ENCODE measurements at regions of chr16 and their contacts with region 1.

Region 1: GRCh38 chr16:10509534-10510025 is 70.8 kb downstream of the EMP2 start:
- DNase-seq: peak; percentile 71
- ATAC-seq: peak; percentile 99
- H3K4me3 ChIP-seq: no peak overlapping the region
- H3K27ac ChIP-seq: no peak overlapping the region
- H3K4me1 ChIP-seq: no peaks in the 10 kb centered on the region
- H3K27me3 ChIP-seq: no peaks in the 10 kb centered on the region
- CTCF ChIP-seq: peak; percentile 75 to 88 (median 78)
- POLR2A ChIP-seq: no peak
- RAD21 ChIP-seq: peak; percentile 95

Region 2: DNA sequence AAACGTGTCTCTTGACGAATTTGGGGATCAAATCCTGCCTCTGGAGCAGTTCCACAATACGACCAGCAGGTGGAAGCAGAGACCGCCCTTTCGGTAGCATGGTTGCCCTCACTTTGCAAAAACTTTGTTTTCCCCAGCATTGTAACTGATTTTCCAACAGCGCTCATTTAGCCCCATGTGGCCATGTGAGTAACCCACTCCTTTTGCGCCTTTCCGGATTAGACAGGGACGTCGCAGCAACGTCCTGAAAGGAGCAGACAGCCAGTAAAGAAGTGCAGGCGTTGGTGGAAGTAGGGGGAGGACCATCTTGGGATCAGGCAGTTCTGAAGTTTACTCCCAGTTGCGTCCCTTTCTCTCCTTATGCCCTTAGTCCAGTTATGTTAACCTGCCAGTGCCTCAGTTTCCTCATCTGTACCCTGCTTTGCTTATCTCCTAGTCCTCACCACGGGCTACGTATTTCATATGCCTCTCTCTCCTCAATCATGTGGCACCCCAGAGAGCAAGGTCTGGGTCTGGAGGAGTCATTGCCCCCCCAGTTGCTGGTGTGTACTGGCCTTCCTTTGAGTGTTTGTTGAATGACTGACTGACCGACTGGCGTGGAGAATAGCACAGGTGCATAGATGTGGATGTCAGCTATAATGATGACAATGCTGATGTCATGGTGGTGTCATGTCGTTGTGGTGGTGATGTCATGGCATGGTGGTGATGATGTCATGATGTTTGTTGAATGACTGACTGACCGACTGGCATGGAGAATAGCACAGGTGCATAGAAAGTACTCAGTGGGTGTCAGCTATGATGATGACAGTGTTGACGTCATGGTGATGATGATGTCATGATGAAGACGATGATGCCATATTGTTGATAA is 1941.6 kb before region 1 on chr16:
- CTCF ChIA-PET with region 1: no interaction called
- POLR2A ChIA-PET with region 1: no interaction called
- RAD21 ChIA-PET with region 1: no interaction called
- intact Hi-C with region 1: loop called (anchors 5 kb)
- DNase-seq: peak; percentile 94
- ATAC-seq: peak; percentile 89
- H3K4me3 ChIP-seq: no peak overlapping the region
- H3K27ac ChIP-seq: no peak overlapping the region
- H3K4me1 ChIP-seq: peaks cover 0 to 4% of the 10 kb centered on the region in 2 experiments; a peak in 1 of 4 replicates
- H3K27me3 ChIP-seq: no peaks in the 10 kb centered on the region
- CTCF ChIP-seq: peak; percentile 98 to 99 (median 99)
- POLR2A ChIP-seq: no peak
- RAD21 ChIP-seq: peak; percentile 99

Region 3: DNA sequence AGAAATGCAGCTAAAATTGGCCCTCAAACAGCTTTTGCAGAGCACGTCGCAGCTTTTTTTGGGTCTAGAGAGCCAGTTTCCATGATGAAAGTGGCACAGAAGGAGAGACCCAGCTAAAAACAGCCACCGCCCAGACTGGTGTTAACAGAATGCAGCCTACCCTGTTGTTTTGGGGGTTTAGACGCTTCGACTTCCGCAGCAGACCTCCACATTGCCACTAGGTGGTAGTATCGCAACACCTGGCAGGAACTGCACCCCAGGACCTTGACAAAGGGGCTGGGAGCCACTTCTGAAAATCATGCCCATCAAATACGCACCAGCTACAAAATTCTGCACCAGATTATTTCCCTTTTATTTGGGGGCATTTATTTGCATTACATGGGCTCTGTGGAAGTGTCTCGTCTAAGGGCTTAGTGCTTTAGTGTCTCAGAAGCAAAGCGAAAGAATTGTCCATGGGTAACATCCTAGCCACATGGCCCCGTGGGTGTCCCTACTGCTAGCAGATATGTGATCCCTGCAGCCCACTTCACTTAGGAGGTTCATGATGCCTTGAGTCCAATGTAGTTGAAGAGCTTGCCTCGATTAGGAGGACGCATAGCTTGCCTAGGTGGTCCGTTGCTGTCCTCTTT is 1251.0 kb before region 1 on chr16:
- CTCF ChIA-PET with region 1: no interaction called
- POLR2A ChIA-PET with region 1: no interaction called
- RAD21 ChIA-PET with region 1: no interaction called
- intact Hi-C with region 1: loop called (anchors 1 kb)
- DNase-seq: peak; percentile 34
- ATAC-seq: peak; percentile 84
- H3K4me3 ChIP-seq: no peak overlapping the region
- H3K27ac ChIP-seq: no peak overlapping the region
- H3K4me1 ChIP-seq: 0 out of 4 replicates have a peak, but pooled peaks cover 0 to 3% of the 10 kb centered on the region in 2 experiments
- H3K27me3 ChIP-seq: peaks cover 15% of the 10 kb centered on the region
- CTCF ChIP-seq: peak; percentile 64 to 93 (median 88)
- POLR2A ChIP-seq: no peak
- RAD21 ChIP-seq: peak; percentile 83

Region 4: DNA sequence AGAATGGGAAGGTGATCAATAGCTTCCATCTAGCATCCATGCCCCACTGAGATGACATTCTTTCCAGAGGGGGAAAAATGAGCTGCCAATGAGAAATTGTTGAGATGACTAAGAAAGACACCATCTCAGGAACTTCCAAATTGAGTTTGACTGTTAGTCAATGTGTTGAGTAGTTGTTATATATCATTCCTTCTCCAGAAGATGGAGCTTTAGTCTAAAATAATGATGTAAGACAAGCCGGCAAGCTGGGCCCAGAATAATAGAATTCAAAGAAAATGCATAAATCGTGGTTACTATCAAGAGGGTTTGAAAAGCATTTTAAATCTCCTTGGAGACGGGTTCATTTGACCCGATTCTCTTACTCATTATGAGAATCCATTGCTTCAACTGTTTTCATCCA is 194.8 kb before region 1 on chr16:
- CTCF ChIA-PET with region 1: interaction called, 35 read pairs
- POLR2A ChIA-PET with region 1: no interaction called
- RAD21 ChIA-PET with region 1: interaction called, 6 to 9 read pairs
- intact Hi-C with region 1: loop called (anchors 1 kb)
- DNase-seq: no peak
- ATAC-seq: peak; percentile 54; the same call in 1 of the 2 replicates
- H3K4me3 ChIP-seq: no peak overlapping the region
- H3K27ac ChIP-seq: no peak overlapping the region
- H3K4me1 ChIP-seq: peaks cover 0 to 5% of the 10 kb centered on the region in 2 experiments; a peak in 1 of 4 replicates
- H3K27me3 ChIP-seq: no peaks in the 10 kb centered on the region
- CTCF ChIP-seq: peak in 2 of 3 experiments; percentile 11 to 54; a peak in 1 of 6 replicates
- POLR2A ChIP-seq: no peak
- RAD21 ChIP-seq: peak; percentile 70

Region 5: GRCh38 chr16:10485698-10486382 is 23.7 kb before region 1 on chr16:
- CTCF ChIA-PET with region 1: no interaction called
- POLR2A ChIA-PET with region 1: no interaction called
- RAD21 ChIA-PET with region 1: no interaction called
- intact Hi-C with region 1: no loop called
- DNase-seq: no peak
- ATAC-seq: 0 out of 2 replicates have a peak, but pooled peaks have one; percentile 25
- H3K4me3 ChIP-seq: no peak overlapping the region
- H3K27ac ChIP-seq: no peak overlapping the region
- H3K4me1 ChIP-seq: no peaks in the 10 kb centered on the region
- H3K27me3 ChIP-seq: no peaks in the 10 kb centered on the region
- CTCF ChIP-seq: no peak
- POLR2A ChIP-seq: no peak
- RAD21 ChIP-seq: no peak

Region 6: DNA sequence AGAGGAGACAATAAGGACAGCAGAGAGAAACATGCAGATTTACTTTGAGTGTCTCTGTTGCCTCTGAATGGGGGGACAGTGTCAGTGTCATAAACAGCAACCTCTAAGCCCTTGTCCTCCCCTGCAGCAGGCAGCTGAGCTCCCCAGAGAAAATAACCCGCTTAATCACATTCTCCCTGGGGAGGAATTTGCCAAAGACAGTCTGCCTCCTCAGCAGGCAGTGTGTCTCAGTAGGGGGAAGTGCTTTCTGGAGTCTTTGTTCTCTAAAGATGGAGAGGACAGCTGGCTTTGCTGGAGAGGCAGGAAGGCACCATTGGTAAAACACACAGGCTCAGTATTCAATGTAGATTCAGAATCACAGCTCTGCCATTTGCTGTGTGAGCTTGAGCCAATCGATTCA is 169.1 kb after region 1 on chr16:
- CTCF ChIA-PET with region 1: no interaction called
- POLR2A ChIA-PET with region 1: no interaction called
- RAD21 ChIA-PET with region 1: no interaction called
- intact Hi-C with region 1: no loop called
- DNase-seq: no peak
- ATAC-seq: no peak
- H3K4me3 ChIP-seq: no peak overlapping the region
- H3K27ac ChIP-seq: no peak overlapping the region
- H3K4me1 ChIP-seq: no peaks in the 10 kb centered on the region
- H3K27me3 ChIP-seq: no peaks in the 10 kb centered on the region
- CTCF ChIP-seq: no peak
- POLR2A ChIP-seq: no peak
- RAD21 ChIP-seq: no peak

Region 7: DNA sequence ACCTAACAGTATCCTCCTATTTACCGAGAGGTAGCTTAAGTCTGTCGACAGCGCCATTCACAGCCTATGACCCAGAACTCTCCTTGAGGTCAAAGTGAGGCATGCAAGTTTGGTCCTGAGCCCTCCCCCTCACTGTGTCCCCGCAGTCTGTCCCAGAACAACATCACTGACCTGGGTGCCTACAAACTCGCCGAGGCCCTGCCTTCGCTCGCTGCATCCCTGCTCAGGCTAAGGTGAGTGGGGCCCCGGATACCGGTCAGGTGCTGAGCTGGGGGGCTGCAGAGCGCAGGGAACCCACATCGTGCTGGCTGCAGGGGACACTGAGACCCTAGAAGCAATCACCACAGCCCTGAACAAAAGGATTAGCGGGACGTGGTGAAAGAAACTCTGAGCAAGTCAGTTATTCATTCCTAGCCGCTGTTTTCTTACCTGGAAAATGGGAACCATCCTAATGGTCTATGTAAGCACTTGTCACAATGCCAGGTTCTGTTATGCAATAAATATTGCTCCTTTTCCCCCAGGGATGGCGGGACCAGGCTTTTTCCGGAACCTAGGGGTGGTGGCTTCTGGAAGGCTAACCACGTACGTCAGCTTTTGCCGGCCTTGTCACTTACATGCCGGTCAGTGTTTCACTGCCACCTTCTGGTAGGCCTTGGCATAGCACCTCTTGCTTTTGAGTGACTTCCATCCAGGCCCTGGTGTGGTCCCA is 408.9 kb after region 1 on chr16:
- CTCF ChIA-PET with region 1: interaction called, 21 read pairs
- POLR2A ChIA-PET with region 1: no interaction called
- RAD21 ChIA-PET with region 1: no interaction called
- intact Hi-C with region 1: loop called (anchors 1 kb)
- DNase-seq: peak; percentile 88
- ATAC-seq: peak; percentile 96
- H3K4me3 ChIP-seq: peak overlapping the region; percentile 8 to 19; a peak in 2 of 4 replicates
- H3K27ac ChIP-seq: no peak overlapping the region; the same call in 1 of the 2 replicates
- H3K4me1 ChIP-seq: peaks cover 7 to 29% of the 10 kb centered on the region in 2 experiments; a peak in 3 of 4 replicates
- H3K27me3 ChIP-seq: no peaks in the 10 kb centered on the region
- CTCF ChIP-seq: peak; percentile 80 to 99 (median 95)
- POLR2A ChIP-seq: no peak
- RAD21 ChIP-seq: peak; percentile 95

Measured in HCT116 (cell line).